CD8-positive, alpha-beta T cell (primary cell): ENCODE measurements at regions of chr1 and their contacts with region 1.

Region 1: DNA sequence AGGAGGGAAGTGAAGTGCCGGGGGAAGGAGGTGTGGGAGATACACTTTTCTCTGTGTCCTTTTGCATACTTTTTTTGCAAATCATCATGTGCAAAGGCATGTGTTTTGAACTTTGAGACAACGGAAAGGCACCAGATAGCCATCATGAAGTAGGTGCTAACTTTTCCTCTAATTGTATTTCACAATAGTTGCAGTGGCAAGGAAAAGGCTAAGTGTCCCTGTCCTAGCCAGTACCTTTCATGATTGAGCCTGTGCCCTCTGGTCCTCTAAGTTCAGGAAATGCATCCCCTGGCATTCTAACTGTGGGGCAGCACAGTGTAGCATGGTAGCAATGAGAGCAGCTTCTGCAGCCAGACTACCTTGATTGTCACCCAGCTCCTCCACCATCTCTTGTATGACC is 186.2 kb downstream of the ADSS2 start:
- DNase-seq: no peak
- ATAC-seq: no peak
- H3K4me3 ChIP-seq: no peak overlapping the region
- H3K4me3 Mint-ChIP-seq: no peak overlapping the region
- H3K27ac ChIP-seq: no peak overlapping the region
- H3K27ac Mint-ChIP-seq: no peak overlapping the region
- H3K4me1 ChIP-seq: no peaks in the 10 kb centered on the region
- H3K4me1 Mint-ChIP-seq: no peaks in the 10 kb centered on the region
- H3K27me3 ChIP-seq: no peaks in the 10 kb centered on the region
- H3K27me3 Mint-ChIP-seq: peaks cover 2% of the 10 kb centered on the region
- CTCF ChIP-seq: no peak

Region 2: DNA sequence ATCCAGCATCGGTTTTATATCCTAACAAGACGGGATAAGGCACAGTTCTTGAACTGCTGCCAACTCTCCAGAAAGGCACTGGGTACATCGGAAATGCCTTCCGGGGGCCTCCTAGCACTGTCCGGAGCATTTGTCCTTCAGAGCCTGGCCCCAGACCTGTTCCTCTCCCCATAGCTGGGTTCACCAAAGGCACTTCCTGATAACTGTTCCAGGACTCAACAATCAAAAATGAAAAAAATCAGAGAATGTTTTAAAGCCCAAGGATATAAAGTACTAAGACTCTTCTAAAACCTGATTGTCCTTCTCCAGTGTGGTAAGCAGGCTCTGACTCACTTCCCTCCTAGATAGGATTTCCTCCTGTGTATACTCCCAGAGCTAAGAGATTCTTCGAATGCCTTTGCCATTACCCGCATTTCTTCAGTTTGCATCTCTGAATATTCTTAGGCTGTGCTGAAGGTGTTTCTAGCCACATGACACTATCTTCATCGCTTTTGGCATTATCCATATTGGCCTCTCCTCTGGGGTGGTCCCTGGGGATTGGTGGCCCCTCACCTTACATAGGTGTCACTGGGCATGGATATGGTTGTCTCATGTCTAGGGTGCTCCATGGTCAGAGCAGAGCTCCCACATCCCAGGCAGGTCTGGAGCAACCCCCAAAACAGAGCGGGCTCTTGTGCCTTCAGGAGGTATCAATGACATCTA is 101.5 kb before region 1 on chr1:
- CTCF ChIA-PET with region 1: no interaction called
- POLR2A ChIA-PET with region 1: no interaction called
- intact Hi-C with region 1: loop called in 1 of 2 experiments (anchors 2 kb)
- DNase-seq: no peak
- ATAC-seq: no peak
- H3K4me3 ChIP-seq: no peak overlapping the region
- H3K4me3 Mint-ChIP-seq: no peak overlapping the region
- H3K27ac ChIP-seq: no peak overlapping the region
- H3K27ac Mint-ChIP-seq: no peak overlapping the region
- H3K4me1 ChIP-seq: no peaks in the 10 kb centered on the region
- H3K4me1 Mint-ChIP-seq: no peaks in the 10 kb centered on the region
- H3K27me3 ChIP-seq: no peaks in the 10 kb centered on the region
- H3K27me3 Mint-ChIP-seq: no peaks in the 10 kb centered on the region
- CTCF ChIP-seq: no peak